CD8-positive, alpha-beta T cell (primary cell): ENCODE measurements at regions of chr1 and their contacts with region 1.

Region 1: GRCh38 chr1:69648486-69648885 is 80.8 kb downstream of the LRRC7 start:
- DNase-seq: peak in 2 of 9 experiments; percentile 29 to 53
- ATAC-seq: peak; percentile 81
- H3K4me3 ChIP-seq: no peak overlapping the region
- H3K4me3 Mint-ChIP-seq: no peak overlapping the region
- H3K27ac ChIP-seq: peak overlapping the region in 1 of 2 experiments; percentile 29
- H3K27ac Mint-ChIP-seq: no peak overlapping the region
- H3K4me1 ChIP-seq: no peaks in the 10 kb centered on the region
- H3K4me1 Mint-ChIP-seq: no peaks in the 10 kb centered on the region
- H3K27me3 ChIP-seq: no peaks in the 10 kb centered on the region
- H3K27me3 Mint-ChIP-seq: no peaks in the 10 kb centered on the region
- CTCF ChIP-seq: no peak

Region 2: DNA sequence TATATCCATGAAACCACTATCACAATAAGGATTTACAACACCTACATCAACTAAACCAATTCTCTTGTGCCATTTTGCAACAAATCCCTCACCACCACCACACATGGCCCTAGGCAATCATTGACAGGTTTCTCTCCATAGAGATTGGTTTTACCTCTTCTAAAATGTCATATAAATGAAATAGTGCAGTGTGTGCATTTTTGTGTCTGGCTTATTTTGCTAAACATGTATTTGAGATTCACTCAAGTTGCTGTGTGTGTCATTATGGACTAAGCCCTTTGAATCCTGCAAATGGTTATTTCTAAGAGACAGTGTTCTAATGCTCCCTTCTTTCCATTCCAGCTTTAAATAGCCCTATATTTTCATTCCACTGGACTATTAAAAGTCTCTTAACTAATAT is 260.4 kb before region 1 on chr1:
- CTCF ChIA-PET with region 1: no interaction called
- POLR2A ChIA-PET with region 1: no interaction called
- intact Hi-C with region 1: no loop called
- DNase-seq: no peak
- ATAC-seq: no peak
- H3K4me3 ChIP-seq: no peak overlapping the region
- H3K4me3 Mint-ChIP-seq: no peak overlapping the region
- H3K27ac ChIP-seq: no peak overlapping the region
- H3K27ac Mint-ChIP-seq: no peak overlapping the region
- H3K4me1 ChIP-seq: no peaks in the 10 kb centered on the region
- H3K4me1 Mint-ChIP-seq: no peaks in the 10 kb centered on the region
- H3K27me3 ChIP-seq: no peaks in the 10 kb centered on the region
- H3K27me3 Mint-ChIP-seq: no peaks in the 10 kb centered on the region
- CTCF ChIP-seq: no peak

Region 3: DNA sequence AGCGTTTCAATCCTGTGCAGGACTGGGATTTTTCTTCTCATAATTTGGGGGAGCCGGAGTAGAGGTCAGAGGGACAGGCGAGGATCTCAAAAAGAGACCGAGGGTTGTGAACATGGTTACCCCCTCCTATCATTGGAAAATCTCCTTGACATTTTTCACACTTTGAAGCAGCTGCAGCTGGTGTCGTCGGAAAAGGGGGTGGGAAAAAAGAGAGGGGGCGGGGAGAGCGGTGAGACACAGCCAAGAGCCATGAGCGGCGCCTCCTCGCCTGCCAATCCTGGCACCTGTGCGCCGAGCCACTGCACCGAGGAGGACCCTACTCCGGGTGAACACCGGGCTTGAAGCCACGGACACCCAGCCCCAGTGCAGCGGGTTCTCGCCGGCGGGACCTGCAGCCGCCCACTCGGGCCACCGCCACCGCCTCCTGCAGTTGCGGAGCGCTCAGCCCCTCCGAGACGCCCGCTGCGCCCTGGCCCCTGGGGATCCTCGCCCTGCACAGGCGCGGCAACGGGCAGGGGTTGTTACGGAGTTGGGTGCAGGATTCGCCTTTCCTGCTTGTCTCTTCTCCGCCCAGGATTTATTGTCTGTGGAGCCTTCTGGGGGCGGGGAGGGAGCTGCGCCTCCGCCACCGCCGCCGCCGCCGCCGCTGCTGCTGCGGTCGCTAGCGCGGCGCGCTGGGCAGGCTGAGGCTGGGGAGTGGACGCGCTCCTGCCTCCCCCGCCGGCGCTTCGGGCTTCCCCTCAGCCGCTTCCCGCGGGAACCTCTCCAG is 80.7 kb before region 1 on chr1 and contains the start of gene LRRC7:
- CTCF ChIA-PET with region 1: no interaction called
- POLR2A ChIA-PET with region 1: no interaction called
- intact Hi-C with region 1: loop called in 1 of 2 experiments (anchors 1 kb)
- DNase-seq: peak in 2 of 9 experiments; percentile 17 to 34
- ATAC-seq: no peak
- H3K4me3 ChIP-seq: peak within 1 kb of the TSS; percentile 15 to 24
- H3K4me3 Mint-ChIP-seq: peak within 1 kb of the TSS; percentile 82
- H3K27ac ChIP-seq: no peak within 1 kb of the TSS
- H3K27ac Mint-ChIP-seq: peak within 1 kb of the TSS; percentile 37
- H3K4me1 ChIP-seq: no peaks in the 10 kb centered on the region
- H3K4me1 Mint-ChIP-seq: no peaks in the 10 kb centered on the region
- H3K27me3 ChIP-seq: peaks cover 0 to 3% of the 10 kb centered on the region in 2 experiments
- H3K27me3 Mint-ChIP-seq: peaks cover 29% of the 10 kb centered on the region
- CTCF ChIP-seq: no peak
- total RNA-seq, gene LRRC7: 2.3 to 3.1 TPM